ENCODE measurements at regions of chr3 and their contacts with region 1.

Region 1: GRCh38 chr3:52056968-52057805 is 816 bp upstream of the DUSP7 start:
- DNase-seq: peak; percentile 100
- H3K4me3 ChIP-seq: peak overlapping the region; percentile 45 to 64 (median 54)
- H3K27ac ChIP-seq: peak overlapping the region; percentile 88
- H3K4me1 ChIP-seq: peaks cover 66% of the 10 kb centered on the region
- H3K27me3 ChIP-seq: no peaks in the 10 kb centered on the region
- CTCF ChIP-seq: peak in 1 of 2 donors; percentile 24

Region 2: DNA sequence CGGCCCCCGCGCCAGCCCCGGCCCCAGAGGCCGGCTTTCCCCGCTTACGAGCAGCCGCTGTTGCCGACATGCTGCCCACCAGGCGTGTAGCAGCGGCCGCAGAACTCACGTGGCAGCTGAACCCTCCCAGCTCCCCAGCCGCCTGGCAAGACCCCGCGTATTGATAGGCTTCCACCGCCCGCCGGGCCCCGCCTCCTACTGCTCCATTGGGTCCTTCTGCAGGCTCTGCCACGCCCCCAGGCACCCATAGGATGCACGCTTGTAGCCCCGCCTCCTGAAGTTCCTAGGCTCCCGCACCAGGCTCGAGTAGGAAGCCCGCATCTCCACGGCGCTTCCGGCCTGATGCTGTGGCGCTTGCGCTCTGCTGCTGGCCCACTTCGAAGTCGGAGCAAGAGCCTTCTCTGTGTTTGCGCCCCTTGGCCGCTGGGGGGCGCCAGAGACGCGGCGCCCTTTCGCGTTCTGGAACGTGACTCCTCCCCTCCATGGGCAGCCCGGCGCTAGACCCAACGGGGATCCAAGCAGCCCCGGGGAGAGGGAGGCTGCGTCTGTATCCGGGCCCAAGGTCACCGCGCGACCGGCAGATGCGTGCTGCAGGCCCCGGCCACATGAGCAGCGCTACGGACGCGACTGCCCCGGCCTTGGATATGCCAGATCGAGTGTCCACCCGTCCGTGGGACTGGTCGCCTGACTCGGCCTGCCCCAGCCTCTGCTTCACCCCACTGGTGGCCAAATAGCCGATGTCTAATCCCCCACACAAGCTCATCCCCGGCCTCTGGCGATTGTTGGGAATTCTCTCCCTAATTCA is 115.2 kb before region 1 on chr3 and contains the starts of genes PARP3 and RRP9:
- CTCF ChIA-PET with region 1: no interaction called
- dilution Hi-C with region 1: no loop called
- in situ Hi-C with region 1: no loop called
- intact Hi-C with region 1: loop called (anchors 1 kb)
- DNase-seq: peak; percentile 100
- H3K4me3 ChIP-seq: peak within 1 kb of the TSS; percentile 62 to 80 (median 73)
- H3K27ac ChIP-seq: peak within 1 kb of the TSS; percentile 38
- H3K4me1 ChIP-seq: peaks cover 21% of the 10 kb centered on the region
- H3K27me3 ChIP-seq: no peaks in the 10 kb centered on the region
- CTCF ChIP-seq: peak; percentile 98 to 100
- total RNA-seq, gene PARP3: 16.1 to 19.7 TPM
- total RNA-seq, gene RRP9: 22.3 to 44.5 TPM

Region 3: DNA sequence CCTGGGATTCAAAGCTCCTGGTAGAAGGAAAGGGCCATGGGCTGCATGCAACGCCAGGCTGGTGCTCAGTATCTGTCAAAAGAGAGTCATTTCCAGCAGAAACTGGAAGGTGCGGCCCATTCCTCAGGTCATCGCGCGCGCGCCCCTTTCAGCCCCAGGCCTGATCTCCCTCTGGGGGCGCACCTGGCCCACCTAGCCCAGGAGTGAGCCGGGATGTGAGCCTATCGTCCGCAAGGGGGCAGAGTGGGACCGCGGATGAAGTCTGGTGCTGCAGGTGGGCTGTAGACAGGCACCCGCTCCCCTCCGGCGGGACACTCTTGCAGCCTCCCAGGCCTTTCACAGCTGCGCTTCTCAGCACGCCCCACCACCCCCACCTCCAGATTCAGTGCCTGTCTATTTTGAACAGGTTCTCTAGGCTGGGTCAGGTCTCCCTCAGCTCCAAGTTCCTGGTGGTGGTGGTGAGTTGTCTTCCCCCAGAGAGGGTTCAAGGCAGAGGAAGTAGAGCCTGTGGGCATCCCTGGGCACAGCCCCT is 55.7 kb before region 1 on chr3:
- CTCF ChIA-PET with region 1: interaction called, 13 read pairs
- dilution Hi-C with region 1: no loop called
- in situ Hi-C with region 1: loop called in 1 of 2 experiments (anchors 10 kb)
- intact Hi-C with region 1: loop called (anchors 1 kb)
- DNase-seq: peak; percentile 49
- H3K4me3 ChIP-seq: no peak overlapping the region
- H3K27ac ChIP-seq: no peak overlapping the region
- H3K4me1 ChIP-seq: peaks cover 35% of the 10 kb centered on the region
- H3K27me3 ChIP-seq: no peaks in the 10 kb centered on the region
- CTCF ChIP-seq: peak; percentile 75 to 90

Region 4: DNA sequence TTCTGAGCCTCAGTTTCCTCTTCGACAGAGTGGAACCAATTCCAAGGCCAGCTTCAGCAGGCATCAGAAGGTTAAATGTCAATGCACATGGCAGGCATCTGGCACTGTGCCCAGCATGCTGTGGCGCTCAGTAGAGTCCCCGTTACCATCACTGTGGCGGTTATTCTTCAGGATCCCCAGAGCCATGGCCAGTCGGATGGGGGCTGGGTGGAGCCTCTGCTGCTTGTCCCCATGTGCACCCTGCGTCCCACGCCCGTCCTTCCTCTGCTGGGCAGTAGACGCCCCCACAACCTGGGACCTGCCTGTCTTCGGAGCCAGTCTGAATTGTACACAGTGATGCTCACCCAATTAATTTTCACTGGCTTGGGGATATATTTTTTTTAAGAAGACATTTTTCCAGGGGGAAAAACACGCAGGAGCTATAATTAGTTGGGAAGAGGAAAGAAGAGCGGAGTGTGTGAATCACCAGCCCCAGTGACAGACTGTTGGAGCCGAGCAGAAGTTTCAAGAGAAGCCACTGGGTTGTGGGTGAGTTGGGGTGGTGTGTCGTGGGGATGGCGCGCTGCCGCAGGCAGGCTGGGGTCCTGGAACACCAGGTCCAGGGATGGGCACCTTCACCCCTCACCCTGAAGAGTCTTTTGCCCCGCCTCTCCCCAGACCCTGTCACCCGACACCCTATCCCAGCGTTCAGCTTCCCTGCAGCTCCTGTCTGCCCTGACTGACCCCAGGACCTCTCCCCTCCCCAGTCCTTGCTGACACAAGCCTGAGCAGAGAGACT is 34.7 kb before region 1 on chr3:
- CTCF ChIA-PET with region 1: no interaction called
- dilution Hi-C with region 1: no loop called
- in situ Hi-C with region 1: no loop called
- intact Hi-C with region 1: no loop called
- DNase-seq: no peak
- H3K4me3 ChIP-seq: no peak overlapping the region
- H3K27ac ChIP-seq: no peak overlapping the region
- H3K4me1 ChIP-seq: no peaks in the 10 kb centered on the region
- H3K27me3 ChIP-seq: no peaks in the 10 kb centered on the region
- CTCF ChIP-seq: no peak

Region 5: GRCh38 chr3:52036222-52036694 is 20.9 kb before region 1 on chr3:
- CTCF ChIA-PET with region 1: interaction called, 13 read pairs
- dilution Hi-C with region 1: no loop called
- in situ Hi-C with region 1: no loop called
- intact Hi-C with region 1: loop called (anchors 1 kb)
- DNase-seq: no peak
- H3K4me3 ChIP-seq: no peak overlapping the region
- H3K27ac ChIP-seq: no peak overlapping the region
- H3K4me1 ChIP-seq: peaks cover 42% of the 10 kb centered on the region
- H3K27me3 ChIP-seq: no peaks in the 10 kb centered on the region
- CTCF ChIP-seq: no peak

Region 6: GRCh38 chr3:52123106-52123725 is 66.0 kb after region 1 on chr3:
- CTCF ChIA-PET with region 1: interaction called, 17 read pairs
- dilution Hi-C with region 1: loop called (anchors 10 kb)
- in situ Hi-C with region 1: loop called in 1 of 2 experiments (anchors 10 kb)
- intact Hi-C with region 1: loop called (anchors 1 kb)
- DNase-seq: peak; percentile 66
- H3K4me3 ChIP-seq: no peak overlapping the region
- H3K27ac ChIP-seq: no peak overlapping the region
- H3K4me1 ChIP-seq: peaks cover 26% of the 10 kb centered on the region
- H3K27me3 ChIP-seq: no peaks in the 10 kb centered on the region
- CTCF ChIP-seq: peak; percentile 99

Region 7: GRCh38 chr3:52385157-52385556 is 328.0 kb after region 1 on chr3:
- CTCF ChIA-PET with region 1: no interaction called
- dilution Hi-C with region 1: no loop called
- in situ Hi-C with region 1: no loop called
- intact Hi-C with region 1: no loop called
- DNase-seq: no peak
- H3K4me3 ChIP-seq: no peak overlapping the region
- H3K27ac ChIP-seq: no peak overlapping the region
- H3K4me1 ChIP-seq: no peaks in the 10 kb centered on the region
- H3K27me3 ChIP-seq: no peaks in the 10 kb centered on the region
- CTCF ChIP-seq: peak; percentile 46 to 54